ENCODE measurements at regions of chr11 and their contacts with region 1.

Region 1: GRCh38 chr11:93741094-93741881 is at the starts of genes C11orf54 and TAF1D:
- DNase-seq: peak; percentile 97
- H3K4me3 Mint-ChIP-seq: peak within 1 kb of the TSS; percentile 93
- H3K27ac Mint-ChIP-seq: peak within 1 kb of the TSS; percentile 97
- H3K4me1 Mint-ChIP-seq: peaks cover 44% of the 10 kb centered on the region
- H3K27me3 Mint-ChIP-seq: no peaks in the 10 kb centered on the region
- total RNA-seq, gene C11orf54: 15.1 to 16.3 TPM
- total RNA-seq, gene TAF1D: 442 to 482 TPM

Region 2: GRCh38 chr11:93197380-93198214 is 543.7 kb before region 1 on chr11 and contains the start of gene SLC36A4:
- CTCF ChIA-PET with region 1: no interaction called
- intact Hi-C with region 1: loop called (anchors 1 kb)
- DNase-seq: peak; percentile 92
- H3K4me3 Mint-ChIP-seq: peak within 1 kb of the TSS; percentile 80
- H3K27ac Mint-ChIP-seq: peak within 1 kb of the TSS; percentile 94
- H3K4me1 Mint-ChIP-seq: peaks cover 14% of the 10 kb centered on the region
- H3K27me3 Mint-ChIP-seq: no peaks in the 10 kb centered on the region
- total RNA-seq, gene SLC36A4: 13.2 to 13.9 TPM

Region 3: DNA sequence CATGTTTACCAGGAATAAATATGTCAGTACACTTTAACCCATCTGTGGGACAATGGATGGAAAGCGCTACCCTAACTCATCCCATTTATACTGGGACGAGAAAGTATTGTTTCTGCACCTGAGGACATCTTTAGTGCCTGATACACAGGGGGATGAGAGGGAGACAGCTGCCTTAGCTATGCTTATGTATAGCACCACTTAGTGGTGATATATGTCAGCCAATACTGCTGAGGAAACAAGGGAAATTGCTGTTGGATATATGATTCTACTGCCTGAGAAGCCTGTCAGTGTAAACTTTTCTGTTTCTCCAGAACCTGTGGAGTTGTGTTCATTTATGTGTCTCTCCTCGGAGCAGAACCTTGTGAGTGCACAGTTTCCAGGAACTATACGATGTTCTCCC is 93.1 kb before region 1 on chr11:
- CTCF ChIA-PET with region 1: no interaction called
- intact Hi-C with region 1: no loop called
- DNase-seq: no peak
- H3K4me3 Mint-ChIP-seq: no peak overlapping the region
- H3K27ac Mint-ChIP-seq: no peak overlapping the region
- H3K4me1 Mint-ChIP-seq: peaks cover 21% of the 10 kb centered on the region
- H3K27me3 Mint-ChIP-seq: no peaks in the 10 kb centered on the region

Region 4: GRCh38 chr11:93662177-93662575 is 79.1 kb before region 1 on chr11:
- CTCF ChIA-PET with region 1: no interaction called
- intact Hi-C with region 1: loop called (anchors 1 kb)
- DNase-seq: no peak
- H3K4me3 Mint-ChIP-seq: peak overlapping the region; percentile 84
- H3K27ac Mint-ChIP-seq: peak overlapping the region; percentile 93
- H3K4me1 Mint-ChIP-seq: peaks cover 43% of the 10 kb centered on the region
- H3K27me3 Mint-ChIP-seq: no peaks in the 10 kb centered on the region

Region 5: DNA sequence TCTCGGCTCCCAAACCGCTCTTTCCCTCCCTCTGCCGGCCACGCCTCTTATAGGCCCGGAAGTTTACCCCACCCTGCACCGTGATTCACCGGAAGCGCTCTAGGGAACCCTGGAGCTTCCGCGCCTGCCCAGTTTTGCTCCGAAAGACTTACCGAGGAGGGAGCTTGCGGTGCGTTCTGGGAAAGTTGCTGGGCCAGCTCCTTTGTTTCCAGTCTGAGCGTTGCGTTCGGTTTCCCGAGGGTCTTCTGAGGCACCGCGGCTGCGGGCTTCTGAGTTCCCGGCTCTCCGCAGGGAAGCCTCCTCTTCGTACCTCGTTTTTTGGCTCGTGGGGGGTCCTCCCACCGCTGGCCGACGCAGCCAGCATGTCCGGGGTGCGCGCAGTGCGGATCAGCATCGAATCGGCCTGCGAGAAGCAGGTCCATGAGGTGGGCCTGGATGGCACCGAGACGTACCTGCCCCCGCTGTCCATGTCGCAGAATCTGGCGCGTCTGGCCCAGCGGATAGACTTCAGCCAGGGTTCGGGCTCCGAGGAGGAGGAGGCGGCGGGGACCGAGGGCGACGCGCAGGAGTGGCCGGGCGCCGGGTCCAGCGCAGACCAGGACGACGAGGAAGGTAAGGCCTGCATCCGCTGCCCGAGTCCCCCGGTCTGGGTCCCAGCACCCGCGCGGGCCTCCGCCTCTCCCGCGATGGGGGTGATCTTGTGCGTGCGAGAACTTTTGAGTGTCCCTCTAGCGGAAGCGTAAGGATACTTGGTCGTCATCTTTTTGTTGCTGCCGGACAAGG is 43.1 kb after region 1 on chr11 and contains the start of gene MED17:
- CTCF ChIA-PET with region 1: interaction called, 10 read pairs
- intact Hi-C with region 1: loop called (anchors 1 kb)
- DNase-seq: peak; percentile 94
- H3K4me3 Mint-ChIP-seq: peak within 1 kb of the TSS; percentile 99
- H3K27ac Mint-ChIP-seq: peak within 1 kb of the TSS; percentile 98
- H3K4me1 Mint-ChIP-seq: peaks cover 43% of the 10 kb centered on the region
- H3K27me3 Mint-ChIP-seq: no peaks in the 10 kb centered on the region
- total RNA-seq, gene MED17: 19.4 to 22.6 TPM

Region 6: DNA sequence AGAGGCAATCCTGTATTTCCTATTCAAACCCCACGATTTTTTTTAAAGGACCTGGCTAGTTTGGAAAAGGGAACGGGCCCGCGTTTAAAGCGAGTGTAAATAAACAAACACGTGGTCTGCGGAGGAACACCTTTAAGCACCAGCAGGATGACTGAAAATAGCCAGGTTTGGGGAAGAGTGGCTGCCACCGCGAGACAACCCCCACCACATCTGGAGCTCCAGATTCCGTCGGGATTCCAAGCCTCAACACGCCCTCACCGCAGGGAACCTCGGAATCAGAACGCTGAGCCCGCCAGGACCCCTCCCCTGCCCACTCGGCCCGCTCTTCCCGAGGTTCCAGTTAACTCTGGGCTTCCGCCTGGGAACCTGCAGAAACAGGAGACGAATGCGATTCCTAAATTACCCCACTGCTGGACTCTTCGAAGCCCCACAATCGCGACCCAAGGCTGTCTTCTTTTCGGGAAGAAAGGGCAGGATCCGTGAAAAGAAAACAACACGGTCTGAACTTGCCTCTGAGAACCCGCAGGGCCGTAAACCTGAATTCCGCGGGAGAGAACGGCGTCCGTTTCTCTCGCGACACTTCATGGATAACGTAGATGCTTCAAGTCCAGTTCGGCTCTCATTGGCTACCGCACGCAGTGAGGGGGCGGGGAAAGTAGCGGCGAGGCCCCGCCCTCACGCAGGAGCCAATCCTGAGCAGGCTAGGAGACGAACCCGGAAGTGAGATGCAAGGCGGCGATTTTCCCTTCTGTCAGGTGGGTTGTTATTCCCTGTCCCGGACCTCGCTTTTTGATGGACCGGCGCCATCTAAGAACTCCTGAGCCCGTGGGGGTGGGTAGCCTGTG is 752.2 kb after region 1 on chr11 and contains the starts of genes ANKRD49 and MRE11:
- CTCF ChIA-PET with region 1: no interaction called
- intact Hi-C with region 1: loop called (anchors 1 kb)
- DNase-seq: peak; percentile 97
- H3K4me3 Mint-ChIP-seq: peak within 1 kb of the TSS; percentile 93
- H3K27ac Mint-ChIP-seq: peak within 1 kb of the TSS; percentile 95
- H3K4me1 Mint-ChIP-seq: peaks cover 25% of the 10 kb centered on the region
- H3K27me3 Mint-ChIP-seq: no peaks in the 10 kb centered on the region
- total RNA-seq, gene ANKRD49: 16.3 to 19.1 TPM
- total RNA-seq, gene MRE11: 33.1 to 37.3 TPM

Region 7: GRCh38 chr11:95089620-95090542 is 1348.6 kb after region 1 on chr11 and contains the start of gene ENDOD1:
- CTCF ChIA-PET with region 1: no interaction called
- intact Hi-C with region 1: loop called (anchors 10 kb)
- DNase-seq: peak; percentile 82
- H3K4me3 Mint-ChIP-seq: peak within 1 kb of the TSS; percentile 86
- H3K27ac Mint-ChIP-seq: peak within 1 kb of the TSS; percentile 87
- H3K4me1 Mint-ChIP-seq: peaks cover 64% of the 10 kb centered on the region
- H3K27me3 Mint-ChIP-seq: no peaks in the 10 kb centered on the region
- total RNA-seq, gene ENDOD1: 14.5 to 15.2 TPM

Measured in activated naive CD4-positive, alpha-beta T cell treated with anti-CD3 and anti-CD28 coated beads for 36 hours (primary cell).